ENCODE measurements at regions of chr9 and their contacts with region 1.

Region 1: DNA sequence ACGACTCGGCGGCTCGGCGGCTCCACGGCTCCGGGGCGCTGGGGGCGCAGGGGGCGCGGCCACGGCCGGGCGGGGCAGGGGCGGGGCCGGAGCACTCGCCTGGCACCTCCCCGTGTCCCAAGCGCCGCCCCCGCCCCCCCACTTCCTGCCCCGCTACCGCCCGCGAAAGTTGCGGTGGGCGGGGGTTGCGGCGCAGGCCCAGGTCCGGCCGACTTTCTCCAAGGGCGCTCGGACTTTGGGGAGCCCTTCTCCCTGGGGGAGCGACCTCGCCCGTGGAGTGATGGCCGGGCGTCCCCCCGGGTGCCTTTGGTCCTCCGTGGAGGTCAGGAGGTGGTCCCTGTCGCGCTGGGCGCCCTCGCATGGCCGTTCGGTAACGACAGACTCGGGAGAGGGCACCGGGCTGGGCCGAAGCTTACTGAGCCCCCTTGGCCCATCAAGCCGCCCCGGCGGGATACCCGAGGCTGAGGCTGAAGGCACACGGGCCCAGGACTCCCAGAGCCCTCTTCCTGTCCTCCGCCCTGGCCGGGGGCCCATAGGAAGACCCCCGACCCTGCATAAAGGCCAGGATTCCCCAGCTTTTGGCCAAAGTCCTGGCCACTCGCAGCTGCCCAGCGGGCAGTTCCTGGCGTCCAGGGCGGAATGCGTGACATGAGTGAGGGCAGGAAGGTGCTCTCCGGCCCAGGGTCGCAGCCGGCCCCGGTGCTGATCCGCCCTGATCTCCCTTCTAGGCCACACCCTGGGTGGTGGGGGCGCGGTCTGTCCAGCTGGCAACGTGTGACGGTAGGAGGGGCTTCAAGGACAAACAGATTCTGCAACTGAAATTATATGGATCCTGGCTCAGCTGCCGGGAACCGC is 883 bp upstream of the VAV2 start:
- DNase-seq: peak; percentile 44 to 92
- H3K4me3 ChIP-seq: peak overlapping the region; percentile 63 to 95
- H3K27ac ChIP-seq: peak overlapping the region; percentile 72 to 87
- H3K4me1 ChIP-seq: peaks cover 0 to 23% of the 10 kb centered on the region in 2 donors
- H3K27me3 ChIP-seq: no peaks in the 10 kb centered on the region
- CTCF ChIP-seq: peak; percentile 15 to 52 (median 44)

Region 2: DNA sequence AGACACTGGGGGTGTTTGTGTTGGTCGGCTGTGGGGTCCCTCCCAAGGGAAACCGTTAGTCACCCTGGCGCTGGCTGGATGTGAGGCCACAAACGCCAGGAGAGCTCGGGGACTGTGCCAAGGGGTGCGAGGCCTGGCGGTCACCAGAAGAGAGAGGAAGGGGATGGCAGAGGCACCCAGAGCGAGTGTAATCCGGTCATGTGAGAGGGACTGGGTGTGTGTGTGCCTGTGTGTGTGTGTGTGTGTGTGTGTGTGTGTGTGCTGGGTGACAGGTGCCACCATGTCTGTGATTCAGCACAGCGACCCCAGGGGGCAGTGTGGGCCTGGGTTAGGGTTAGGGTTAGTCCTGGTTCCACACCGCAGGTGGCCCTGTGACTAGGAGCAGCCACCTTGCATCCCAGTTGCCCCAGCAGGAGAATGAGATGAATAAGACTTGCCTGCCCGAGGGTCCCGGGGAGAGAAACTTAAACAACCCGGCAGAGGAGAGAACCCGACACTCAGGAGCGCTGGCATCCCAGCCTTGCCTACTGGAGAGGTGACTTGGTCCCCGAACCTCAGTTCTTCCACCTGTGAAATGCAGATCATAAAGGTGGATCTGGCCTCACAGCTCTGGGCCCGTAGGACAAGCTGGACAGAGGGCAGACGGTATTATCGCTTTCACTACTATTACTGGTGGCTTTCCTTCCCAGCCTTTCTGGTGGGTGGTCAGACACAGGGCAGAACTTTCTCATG is 459.9 kb before region 1 on chr9:
- intact Hi-C with region 1: loop called (anchors 5 kb)
- DNase-seq: peak in 1 of 2 donors; percentile 78
- H3K4me3 ChIP-seq: no peak overlapping the region
- H3K27ac ChIP-seq: no peak overlapping the region
- H3K4me1 ChIP-seq: peaks cover 9 to 13% of the 10 kb centered on the region in 2 donors
- H3K27me3 ChIP-seq: no peaks in the 10 kb centered on the region
- CTCF ChIP-seq: peak; percentile 45 to 64 (median 53)

Region 3: DNA sequence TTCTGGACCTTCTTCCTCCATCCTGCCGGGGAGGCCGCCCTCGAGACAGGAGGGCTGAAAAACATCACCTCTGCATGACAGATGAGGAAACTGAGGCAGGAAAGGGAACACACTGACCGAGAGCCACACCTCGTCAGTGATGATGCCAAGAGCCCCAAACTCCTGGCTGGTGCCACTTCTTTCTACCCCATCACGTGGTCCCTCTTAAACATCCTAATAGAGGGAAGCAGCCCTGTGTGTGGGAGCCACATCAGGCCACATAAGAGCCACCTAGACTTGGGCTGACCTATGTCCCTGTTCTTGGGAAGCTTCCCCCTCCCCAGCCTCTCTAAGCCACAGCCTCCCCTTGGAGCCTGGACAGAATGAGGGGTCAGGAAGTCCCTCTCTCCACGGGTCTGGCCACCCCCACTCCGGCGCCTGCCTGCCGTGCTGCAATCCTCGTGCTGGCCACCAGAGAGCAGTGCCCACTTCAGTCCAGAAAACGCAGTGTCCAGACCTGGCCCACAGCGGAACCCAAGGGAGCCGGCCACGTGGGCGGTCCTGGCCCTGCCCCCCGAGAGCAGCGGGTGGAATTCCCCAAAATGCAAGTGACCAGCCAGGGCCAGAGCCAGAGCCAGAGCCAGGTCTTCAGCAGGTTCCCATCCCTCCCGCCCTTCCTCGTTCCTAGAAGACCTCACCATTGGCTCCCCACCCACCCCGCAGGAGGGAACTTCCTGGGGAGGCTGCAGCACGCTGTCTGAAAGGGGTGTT is 200.1 kb before region 1 on chr9:
- intact Hi-C with region 1: loop called (anchors 1 kb)
- DNase-seq: peak; percentile 23 to 86
- H3K4me3 ChIP-seq: no peak overlapping the region
- H3K27ac ChIP-seq: no peak overlapping the region
- H3K4me1 ChIP-seq: peaks cover 0 to 4% of the 10 kb centered on the region in 2 donors
- H3K27me3 ChIP-seq: no peaks in the 10 kb centered on the region
- CTCF ChIP-seq: peak; percentile 94 to 95 (median 94)

Region 4: GRCh38 chr9:133935328-133936040 is 57.5 kb before region 1 on chr9:
- intact Hi-C with region 1: no loop called
- DNase-seq: no peak
- H3K4me3 ChIP-seq: no peak overlapping the region
- H3K27ac ChIP-seq: peak overlapping the region; percentile 14 to 48
- H3K4me1 ChIP-seq: no peaks in the 10 kb centered on the region
- H3K27me3 ChIP-seq: no peaks in the 10 kb centered on the region
- CTCF ChIP-seq: no peak

Region 5: GRCh38 chr9:134014946-134015345 is 21.9 kb after region 1 on chr9:
- intact Hi-C with region 1: no loop called
- DNase-seq: no peak
- H3K4me3 ChIP-seq: no peak overlapping the region
- H3K27ac ChIP-seq: no peak overlapping the region
- H3K4me1 ChIP-seq: no peaks in the 10 kb centered on the region
- H3K27me3 ChIP-seq: no peaks in the 10 kb centered on the region
- CTCF ChIP-seq: no peak

Measured in ascending aorta (tissue), 2 donors.